MCF 10A (cell line): ENCODE measurements at regions of chr4 and their contacts with region 1.

Region 1: GRCh38 chr4:13548984-13549546 is 4.8 kb upstream of the NKX3-2 start:
- DNase-seq: peak; percentile 85
- H3K4me3 Mint-ChIP-seq: peak overlapping the region; percentile 70
- H3K27ac Mint-ChIP-seq: no peak overlapping the region
- H3K4me1 Mint-ChIP-seq: no peaks in the 10 kb centered on the region
- H3K27me3 Mint-ChIP-seq: no peaks in the 10 kb centered on the region
- CTCF ChIP-seq: peak; percentile 88

Region 2: GRCh38 chr4:12729384-12729783 is 819.7 kb before region 1 on chr4:
- CTCF ChIA-PET with region 1: interaction called, 31 read pairs
- POLR2A ChIA-PET with region 1: no interaction called
- intact Hi-C with region 1: loop called (anchors 1 kb)
- DNase-seq: peak; percentile 44
- H3K4me3 Mint-ChIP-seq: no peak overlapping the region
- H3K27ac Mint-ChIP-seq: no peak overlapping the region
- H3K4me1 Mint-ChIP-seq: peaks cover 3% of the 10 kb centered on the region
- H3K27me3 Mint-ChIP-seq: no peaks in the 10 kb centered on the region
- CTCF ChIP-seq: peak; percentile 51

Region 3: DNA sequence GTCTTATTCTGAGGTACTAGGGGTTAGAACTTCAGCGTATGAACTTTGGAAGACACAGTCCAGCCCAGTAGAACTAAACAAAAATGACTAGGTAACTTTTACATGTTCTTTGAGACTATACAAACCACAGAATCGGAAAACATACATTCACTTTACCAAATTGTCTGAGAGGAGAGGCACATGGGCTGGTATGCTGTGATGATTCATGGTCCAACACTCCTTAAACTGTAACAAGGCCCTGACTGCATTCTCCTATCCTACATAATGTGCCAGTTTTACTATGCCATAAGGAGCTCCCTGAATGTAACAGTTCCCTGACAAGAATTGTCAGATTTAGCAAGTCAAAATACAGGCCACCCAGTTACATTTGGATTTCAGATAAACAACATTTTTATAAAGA is 704.9 kb before region 1 on chr4:
- CTCF ChIA-PET with region 1: interaction called, 25 read pairs
- POLR2A ChIA-PET with region 1: no interaction called
- intact Hi-C with region 1: loop called (anchors 2 kb)
- DNase-seq: peak; percentile 17
- H3K4me3 Mint-ChIP-seq: no peak overlapping the region
- H3K27ac Mint-ChIP-seq: peak overlapping the region; percentile 90
- H3K4me1 Mint-ChIP-seq: peaks cover 12% of the 10 kb centered on the region
- H3K27me3 Mint-ChIP-seq: no peaks in the 10 kb centered on the region
- CTCF ChIP-seq: no peak

Region 4: GRCh38 chr4:12852338-12853307 is 696.4 kb before region 1 on chr4:
- CTCF ChIA-PET with region 1: interaction called, 32 read pairs
- POLR2A ChIA-PET with region 1: interaction called, 5 read pairs
- intact Hi-C with region 1: loop called (anchors 1 kb)
- DNase-seq: peak; percentile 85
- H3K4me3 Mint-ChIP-seq: peak overlapping the region; percentile 16
- H3K27ac Mint-ChIP-seq: peak overlapping the region; percentile 93
- H3K4me1 Mint-ChIP-seq: peaks cover 7% of the 10 kb centered on the region
- H3K27me3 Mint-ChIP-seq: no peaks in the 10 kb centered on the region
- CTCF ChIP-seq: peak; percentile 64

Region 5: DNA sequence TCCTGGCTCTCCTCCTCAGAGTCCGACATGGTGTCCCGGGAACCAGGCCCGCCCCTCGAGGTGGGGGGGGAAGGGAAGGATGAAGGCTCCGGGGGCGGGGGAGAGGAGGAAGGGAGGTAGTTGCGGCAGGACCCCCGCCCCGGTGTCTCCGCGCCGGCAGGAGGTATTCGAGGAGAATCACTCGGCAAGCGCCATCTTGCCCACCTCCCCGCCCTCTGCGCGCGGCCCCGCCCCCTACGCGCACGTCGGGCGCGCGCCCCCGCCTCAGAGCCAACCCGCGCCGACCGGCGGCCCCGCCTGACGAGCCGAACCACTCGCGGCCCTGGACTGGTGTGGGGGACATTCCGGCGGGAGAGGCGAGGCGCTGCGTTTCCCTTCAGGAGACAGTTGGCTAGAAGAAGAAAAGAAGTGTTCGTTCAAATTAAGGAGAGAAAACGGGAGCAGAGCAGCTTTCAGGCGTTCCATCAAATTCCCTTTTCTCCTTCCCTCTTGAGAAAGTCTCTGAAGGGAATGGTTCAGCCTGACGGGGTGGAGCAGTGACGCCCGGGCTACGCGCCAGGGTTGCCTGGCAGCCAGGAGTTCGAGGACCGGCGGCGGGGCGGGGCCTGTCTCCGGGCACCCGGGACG is 64.8 kb before region 1 on chr4 and contains the start of gene RAB28:
- CTCF ChIA-PET with region 1: interaction called, 5 read pairs
- POLR2A ChIA-PET with region 1: interaction called, 3 read pairs
- intact Hi-C with region 1: loop called (anchors 2 kb)
- DNase-seq: peak; percentile 93
- H3K4me3 Mint-ChIP-seq: peak within 1 kb of the TSS; percentile 80
- H3K27ac Mint-ChIP-seq: peak within 1 kb of the TSS; percentile 95
- H3K4me1 Mint-ChIP-seq: peaks cover 11% of the 10 kb centered on the region
- H3K27me3 Mint-ChIP-seq: no peaks in the 10 kb centered on the region
- CTCF ChIP-seq: no peak
- total RNA-seq, gene RAB28: 15.9 and 18.7 TPM in 2 replicates

Region 6: GRCh38 chr4:13535708-13536361 is 13.2 kb before region 1 on chr4:
- CTCF ChIA-PET with region 1: interaction called, 13 read pairs
- POLR2A ChIA-PET with region 1: no interaction called
- intact Hi-C with region 1: no loop called
- DNase-seq: no peak
- H3K4me3 Mint-ChIP-seq: no peak overlapping the region
- H3K27ac Mint-ChIP-seq: no peak overlapping the region
- H3K4me1 Mint-ChIP-seq: no peaks in the 10 kb centered on the region
- H3K27me3 Mint-ChIP-seq: no peaks in the 10 kb centered on the region
- CTCF ChIP-seq: no peak

Region 7: DNA sequence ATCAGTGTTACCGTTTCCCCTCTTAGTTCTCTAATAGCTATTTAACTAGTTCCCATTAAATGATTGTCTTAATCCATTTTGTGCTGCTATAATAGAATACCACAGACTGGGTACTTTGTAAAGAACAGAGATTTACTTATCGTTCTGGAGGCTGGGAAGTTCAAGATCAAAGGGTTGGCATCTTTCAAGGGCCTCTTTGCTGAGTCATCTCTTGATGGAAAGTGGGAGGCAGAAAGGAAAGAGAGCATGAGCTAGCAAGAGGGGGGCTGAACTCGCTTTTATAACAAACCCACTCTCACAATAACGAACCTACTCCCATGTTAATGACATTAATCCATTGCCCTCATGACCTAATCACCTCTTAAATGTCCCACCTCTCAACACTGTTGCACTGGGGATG is 12.6 kb after region 1 on chr4:
- CTCF ChIA-PET with region 1: interaction called, 25 read pairs
- POLR2A ChIA-PET with region 1: no interaction called
- intact Hi-C with region 1: no loop called
- DNase-seq: no peak
- H3K4me3 Mint-ChIP-seq: no peak overlapping the region
- H3K27ac Mint-ChIP-seq: no peak overlapping the region
- H3K4me1 Mint-ChIP-seq: peaks cover 14% of the 10 kb centered on the region
- H3K27me3 Mint-ChIP-seq: no peaks in the 10 kb centered on the region
- CTCF ChIP-seq: no peak

Region 8: DNA sequence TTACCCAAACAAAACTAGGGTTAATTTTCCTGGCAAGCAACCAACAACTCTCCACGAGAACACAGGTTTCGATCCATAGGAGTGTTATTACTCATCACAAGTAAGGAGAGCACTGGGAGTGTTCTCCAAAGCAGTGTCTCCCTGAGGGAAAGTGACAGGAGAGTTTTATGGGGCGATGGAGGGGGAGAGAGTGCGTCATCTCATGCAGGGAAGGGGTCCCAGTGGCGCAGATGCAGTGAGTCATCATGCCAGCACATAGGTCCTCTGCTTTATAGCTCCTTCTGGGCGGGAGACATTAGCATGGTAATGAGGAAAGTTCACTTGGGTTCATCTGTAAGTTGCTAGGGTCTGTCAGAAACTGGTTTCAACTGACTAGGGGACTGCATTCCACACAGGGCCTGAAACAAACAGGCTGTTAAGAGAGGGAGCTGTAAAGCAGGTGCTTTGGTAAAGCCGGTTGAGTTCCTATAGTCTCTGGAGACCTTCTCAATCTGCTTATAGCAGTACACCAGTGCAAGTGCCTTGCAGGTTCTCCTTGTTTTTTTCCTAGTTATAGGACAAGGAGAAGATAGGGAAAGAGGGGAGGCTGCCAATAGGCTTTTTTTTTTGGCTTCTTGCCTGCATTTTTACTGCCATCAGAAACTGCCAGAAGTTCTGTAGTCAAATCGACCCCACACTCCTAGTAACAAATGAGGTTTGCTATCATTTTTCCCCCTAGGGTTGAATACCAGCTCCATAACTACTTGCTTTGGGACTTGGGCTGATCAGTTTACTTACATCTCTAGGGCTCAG is 91.3 kb after region 1 on chr4:
- CTCF ChIA-PET with region 1: no interaction called
- POLR2A ChIA-PET with region 1: no interaction called
- intact Hi-C with region 1: no loop called
- DNase-seq: peak; percentile 94
- H3K4me3 Mint-ChIP-seq: peak overlapping the region; percentile 43
- H3K27ac Mint-ChIP-seq: no peak overlapping the region
- H3K4me1 Mint-ChIP-seq: peaks cover 38% of the 10 kb centered on the region
- H3K27me3 Mint-ChIP-seq: no peaks in the 10 kb centered on the region
- CTCF ChIP-seq: no peak